Panc1 (cell line): ENCODE measurements at regions of chr12 and their contacts with region 1.

Region 1: GRCh38 chr12:53365245-53365904 is 14.6 kb upstream of the SP1 start:
- DNase-seq: no peak
- ATAC-seq: no peak
- H3K4me3 ChIP-seq: no peak overlapping the region
- H3K27ac ChIP-seq: no peak overlapping the region
- H3K4me1 ChIP-seq: peaks cover 7% of the 10 kb centered on the region; the same call in 1 of the 2 replicates
- H3K27me3 ChIP-seq: no peaks in the 10 kb centered on the region
- CTCF ChIP-seq: no peak

Region 2: GRCh38 chr12:53441040-53441833 is 75.9 kb after region 1 on chr12 and contains the start of gene PRR13:
- CTCF ChIA-PET with region 1: interaction called, 12 read pairs
- POLR2A ChIA-PET with region 1: no interaction called
- in situ Hi-C with region 1: no loop called
- intact Hi-C with region 1: no loop called
- DNase-seq: peak; percentile 99
- ATAC-seq: peak; percentile 97
- H3K4me3 ChIP-seq: peak within 1 kb of the TSS; percentile 79 to 99
- H3K27ac ChIP-seq: peak within 1 kb of the TSS; percentile 100
- H3K4me1 ChIP-seq: peaks cover 7% of the 10 kb centered on the region
- H3K27me3 ChIP-seq: no peaks in the 10 kb centered on the region
- CTCF ChIP-seq: no peak
- total RNA-seq, gene PRR13: 454 TPM